MCF 10A (cell line): ENCODE measurements at regions of chr7 and their contacts with region 1.

Region 1: DNA sequence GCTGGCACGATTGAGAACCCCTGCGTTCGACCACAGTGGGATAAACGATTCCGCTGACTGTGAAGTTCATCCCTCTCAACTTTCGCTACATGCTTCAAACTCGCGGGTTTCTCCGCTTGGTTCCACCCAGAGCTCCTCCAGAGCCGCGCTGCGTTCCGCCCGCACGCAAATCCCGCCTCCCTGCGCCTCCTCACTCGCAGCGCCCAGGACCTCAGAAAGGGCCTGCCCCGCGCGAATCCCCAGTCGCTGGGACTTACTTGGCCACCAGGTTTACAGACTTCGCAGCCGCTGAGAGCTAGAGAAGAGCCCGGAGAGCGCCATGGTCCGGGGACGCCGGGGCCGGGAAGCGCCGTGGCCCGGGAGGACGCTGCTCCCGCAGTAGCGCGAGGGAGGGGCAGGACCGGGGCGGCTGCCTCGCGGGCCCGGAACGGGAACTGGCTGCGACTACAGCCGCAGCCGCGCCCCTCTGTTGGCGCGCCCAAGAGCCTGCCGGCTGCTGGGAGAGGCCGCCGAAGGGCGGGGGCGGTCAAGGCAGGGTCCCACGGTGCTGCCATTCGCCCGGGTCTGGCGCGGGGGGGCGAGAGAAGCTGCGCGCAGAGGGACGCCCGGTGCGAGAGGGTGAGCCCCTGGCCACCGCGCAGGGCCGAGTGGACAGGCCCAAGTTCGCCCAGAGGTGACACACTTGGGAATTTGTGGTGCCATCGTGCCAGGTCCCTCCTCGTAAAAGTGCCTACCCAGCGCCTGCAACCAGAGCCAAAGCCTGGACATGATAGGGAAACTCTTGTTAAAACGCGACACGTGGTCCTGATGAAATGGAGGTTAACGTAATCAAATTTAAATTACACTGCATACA is at the start of gene NOD1:
- DNase-seq: peak; percentile 73
- H3K4me3 Mint-ChIP-seq: peak within 1 kb of the TSS; percentile 86
- H3K27ac Mint-ChIP-seq: peak within 1 kb of the TSS; percentile 77
- H3K4me1 Mint-ChIP-seq: peaks cover 6% of the 10 kb centered on the region
- H3K27me3 Mint-ChIP-seq: no peaks in the 10 kb centered on the region
- CTCF ChIP-seq: no peak
- total RNA-seq, gene NOD1: 3.8 and 4.8 TPM in 2 replicates

Region 2: DNA sequence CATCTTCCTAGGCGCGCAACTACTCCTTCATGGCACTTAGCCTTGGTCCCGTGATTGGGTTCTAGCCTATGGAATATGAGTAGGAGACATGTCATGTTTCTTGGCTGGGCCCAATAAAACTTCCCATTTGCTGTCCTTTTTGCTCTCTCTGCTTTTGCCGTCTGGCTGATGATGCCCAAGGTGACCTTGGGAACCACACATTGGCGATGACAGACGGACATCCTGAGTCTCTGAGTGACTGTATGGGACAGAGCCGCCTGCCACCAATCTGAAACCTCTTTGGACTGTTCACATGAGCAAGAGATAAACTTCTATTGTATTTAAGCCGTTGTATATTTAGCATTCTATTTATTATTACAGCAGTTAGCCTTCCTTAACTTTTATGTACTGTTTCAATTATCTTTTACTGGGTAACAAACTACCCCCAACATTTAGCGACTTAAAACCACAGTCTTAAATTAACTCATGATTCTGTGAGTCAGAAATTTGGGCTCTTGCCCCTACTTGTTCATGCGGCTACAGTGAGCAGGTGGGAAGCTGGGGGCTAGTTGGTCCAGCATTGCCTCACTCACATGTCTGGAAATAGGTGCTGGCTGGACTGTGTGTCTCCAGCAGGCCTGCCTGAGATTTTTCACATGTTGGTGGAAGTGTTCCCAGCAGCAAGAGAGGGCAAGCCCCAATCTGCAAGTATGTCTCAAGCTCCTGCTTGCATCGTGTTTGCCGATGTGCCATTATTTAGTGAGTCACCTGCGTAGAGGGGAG is 71.7 kb before region 1 on chr7:
- CTCF ChIA-PET with region 1: interaction called, 4 read pairs
- POLR2A ChIA-PET with region 1: interaction called, 12 read pairs
- intact Hi-C with region 1: no loop called
- DNase-seq: peak; percentile 96
- H3K4me3 Mint-ChIP-seq: peak overlapping the region; percentile 36
- H3K27ac Mint-ChIP-seq: peak overlapping the region; percentile 96
- H3K4me1 Mint-ChIP-seq: peaks cover 44% of the 10 kb centered on the region
- H3K27me3 Mint-ChIP-seq: no peaks in the 10 kb centered on the region
- CTCF ChIP-seq: no peak

Region 3: GRCh38 chr7:30464231-30464671 is 14.3 kb before region 1 on chr7:
- CTCF ChIA-PET with region 1: interaction called, 8 read pairs
- POLR2A ChIA-PET with region 1: interaction called, 33 read pairs
- intact Hi-C with region 1: no loop called
- DNase-seq: no peak
- H3K4me3 Mint-ChIP-seq: no peak overlapping the region
- H3K27ac Mint-ChIP-seq: no peak overlapping the region
- H3K4me1 Mint-ChIP-seq: peaks cover 20% of the 10 kb centered on the region
- H3K27me3 Mint-ChIP-seq: no peaks in the 10 kb centered on the region
- CTCF ChIP-seq: no peak

Region 4: DNA sequence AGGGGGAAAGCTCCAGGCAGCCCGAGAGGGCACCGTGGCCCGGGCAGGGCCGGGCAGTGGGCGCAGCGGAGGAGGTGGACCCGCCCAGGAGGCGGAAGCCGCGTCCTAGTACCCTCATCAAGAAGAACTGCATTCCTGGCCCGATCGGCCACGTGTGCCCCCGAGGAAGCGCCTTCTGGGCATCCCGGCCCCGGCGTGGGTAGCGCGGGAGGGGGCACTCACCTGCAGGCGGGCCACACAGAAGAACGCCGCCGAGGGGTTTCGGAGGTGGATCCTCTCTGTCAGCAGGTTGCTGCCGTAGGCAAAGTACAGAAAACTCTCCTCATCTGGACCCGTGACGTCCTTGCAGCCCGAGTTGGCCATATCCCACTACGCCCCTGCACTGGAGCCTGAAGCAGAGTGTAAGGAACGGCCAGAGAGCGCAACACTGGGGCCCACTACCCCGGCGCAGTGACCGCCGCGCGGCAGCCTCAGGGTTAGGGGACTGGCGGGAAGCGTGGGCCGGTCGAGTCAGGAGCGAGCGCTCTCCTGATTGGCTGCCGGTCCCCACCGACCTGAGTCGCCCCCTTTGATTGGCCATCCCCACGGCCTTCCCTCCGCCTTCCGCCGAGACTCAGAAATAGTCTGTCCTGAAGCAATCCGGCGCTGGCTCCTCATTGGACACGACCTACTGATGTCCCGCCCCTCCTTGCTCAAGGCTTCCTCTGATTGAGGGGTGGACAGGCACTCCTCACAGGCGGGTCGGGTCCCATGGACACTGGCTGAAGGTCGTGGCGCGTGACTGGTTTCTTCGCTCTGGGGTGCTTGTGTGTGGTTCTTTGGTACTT is 26.0 kb after region 1 on chr7 and contains the start of gene GGCT:
- CTCF ChIA-PET with region 1: no interaction called
- POLR2A ChIA-PET with region 1: interaction called, 14 read pairs
- intact Hi-C with region 1: loop called (anchors 1 kb)
- DNase-seq: peak; percentile 99
- H3K4me3 Mint-ChIP-seq: peak within 1 kb of the TSS; percentile 83
- H3K27ac Mint-ChIP-seq: peak within 1 kb of the TSS; percentile 77
- H3K4me1 Mint-ChIP-seq: peaks cover 30% of the 10 kb centered on the region
- H3K27me3 Mint-ChIP-seq: no peaks in the 10 kb centered on the region
- CTCF ChIP-seq: no peak
- total RNA-seq, gene GGCT: 48.3 and 64.8 TPM in 2 replicates

Region 5: DNA sequence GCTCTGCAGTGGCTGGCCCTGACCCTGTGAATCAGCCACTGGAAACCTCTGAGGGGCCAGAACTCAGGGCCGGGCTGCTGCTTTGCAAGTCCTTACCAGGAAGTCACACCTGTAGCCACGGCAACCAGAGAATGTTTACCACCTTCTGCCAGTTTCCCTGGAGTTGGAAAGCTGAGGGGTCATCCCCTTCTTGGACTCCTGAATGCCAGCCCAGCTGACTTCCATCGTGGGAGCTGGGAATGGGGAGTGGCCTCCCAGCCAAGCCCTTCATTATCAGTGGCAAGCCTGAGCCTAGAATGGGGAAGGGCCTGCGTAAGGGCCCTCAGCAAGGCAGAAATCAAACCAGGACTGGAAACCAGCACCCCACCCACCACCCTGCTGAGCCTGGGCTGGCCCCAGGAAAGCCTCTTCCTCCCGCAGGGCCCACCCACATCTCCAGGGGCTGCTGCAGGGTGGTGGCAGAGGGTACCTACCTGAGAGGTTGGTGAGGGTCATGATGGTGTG is 210.2 kb after region 1 on chr7:
- CTCF ChIA-PET with region 1: no interaction called
- POLR2A ChIA-PET with region 1: no interaction called
- intact Hi-C with region 1: no loop called
- DNase-seq: no peak
- H3K4me3 Mint-ChIP-seq: no peak overlapping the region
- H3K27ac Mint-ChIP-seq: no peak overlapping the region
- H3K4me1 Mint-ChIP-seq: no peaks in the 10 kb centered on the region
- H3K27me3 Mint-ChIP-seq: peaks cover 50% of the 10 kb centered on the region
- CTCF ChIP-seq: no peak